ENCODE measurements at regions of chr11 and their contacts with region 1.

Region 1: DNA sequence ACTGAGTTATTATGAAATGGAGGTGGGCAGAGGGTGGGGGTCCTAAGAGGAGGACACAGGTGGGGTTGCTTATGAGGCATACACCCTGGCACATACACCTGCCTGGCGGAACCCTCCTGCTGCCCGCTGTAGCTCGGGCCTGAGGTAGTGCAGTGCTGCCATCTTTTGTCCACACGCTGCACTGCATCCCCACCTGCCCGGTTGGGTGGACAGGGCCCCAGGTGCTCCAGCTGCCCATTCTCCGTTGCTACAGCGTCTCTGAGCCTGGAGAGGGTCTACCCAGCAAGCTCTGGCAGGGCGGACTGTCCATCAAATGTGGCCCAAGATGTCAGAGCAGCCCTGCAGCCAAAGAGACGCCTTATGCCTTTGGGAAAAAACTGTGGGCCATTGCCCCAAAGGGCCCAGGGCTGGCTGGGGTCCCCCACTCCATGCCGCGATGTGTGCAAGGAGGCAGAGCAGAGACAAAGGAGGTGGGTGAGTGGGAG is 131.2 kb downstream of the BUD13 start:
- DNase-seq: peak; percentile 34
- H3K4me3 Mint-ChIP-seq: no peak overlapping the region
- H3K27ac Mint-ChIP-seq: no peak overlapping the region
- H3K4me1 Mint-ChIP-seq: no peaks in the 10 kb centered on the region
- H3K27me3 Mint-ChIP-seq: no peaks in the 10 kb centered on the region

Region 2: DNA sequence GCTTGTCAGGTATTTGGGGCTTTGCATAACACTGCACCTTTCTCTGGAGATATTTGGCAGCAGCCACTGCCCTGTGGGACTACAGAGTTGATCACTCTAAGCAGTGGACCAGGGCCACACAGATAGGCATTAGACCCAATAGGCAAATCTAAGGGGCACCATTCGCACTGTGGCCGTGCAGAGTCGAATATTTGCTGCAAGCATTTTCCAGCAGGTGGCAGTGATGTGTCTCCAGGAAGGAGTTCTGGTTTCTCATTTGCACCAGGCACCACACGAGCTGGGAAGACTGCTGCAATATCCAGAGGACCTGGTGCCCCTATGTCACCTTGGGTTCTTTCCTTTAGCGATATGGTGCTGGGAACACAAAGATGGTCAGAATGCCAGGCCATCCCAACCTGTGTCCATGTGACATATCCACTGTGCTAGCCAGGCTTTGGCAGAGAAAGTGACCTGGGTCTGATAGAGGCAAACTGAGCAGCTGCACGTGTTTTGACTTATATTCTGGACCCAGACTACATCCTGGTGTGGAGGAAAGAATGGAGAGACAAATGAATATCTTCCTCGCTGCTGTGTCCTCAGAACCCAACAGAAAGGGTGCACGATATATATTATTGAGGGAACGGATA is 187.5 kb before region 1 on chr11:
- CTCF ChIA-PET with region 1: interaction called, 10 read pairs
- POLR2A ChIA-PET with region 1: no interaction called
- DNase-seq: peak; percentile 31
- H3K4me3 Mint-ChIP-seq: no peak overlapping the region
- H3K27ac Mint-ChIP-seq: no peak overlapping the region
- H3K4me1 Mint-ChIP-seq: no peaks in the 10 kb centered on the region
- H3K27me3 Mint-ChIP-seq: no peaks in the 10 kb centered on the region

Region 3: GRCh38 chr11:116513894-116514293 is 127.7 kb before region 1 on chr11:
- CTCF ChIA-PET with region 1: interaction called, 12 read pairs
- POLR2A ChIA-PET with region 1: no interaction called
- DNase-seq: peak; percentile 43
- H3K4me3 Mint-ChIP-seq: no peak overlapping the region
- H3K27ac Mint-ChIP-seq: no peak overlapping the region
- H3K4me1 Mint-ChIP-seq: peaks cover under 1% of the 10 kb centered on the region
- H3K27me3 Mint-ChIP-seq: peaks cover 7% of the 10 kb centered on the region

Measured in activated CD4-positive, alpha-beta memory T cell treated with anti-CD3 and anti-CD28 coated beads, Interleukin-2, amount 10 ng/mL, durations not matched to agents 7 days and 5 days (primary cell).